Left ventricle myocardium inferior (tissue), 1 donor: ENCODE measurements at regions of chr7 and their contacts with region 1.

Region 1: GRCh38 chr7:54839538-54840213 is 80.7 kb upstream of the SEC61G start:
- DNase-seq: peak; percentile 82
- H3K4me3 ChIP-seq: no peak overlapping the region
- H3K27ac ChIP-seq: peak overlapping the region; percentile 36
- H3K4me1 ChIP-seq: peaks cover 33% of the 10 kb centered on the region
- H3K27me3 ChIP-seq: no peaks in the 10 kb centered on the region
- CTCF ChIP-seq: peak; percentile 80

Region 2: GRCh38 chr7:54360075-54360840 is 479.4 kb before region 1 on chr7:
- intact Hi-C with region 1: no loop called
- DNase-seq: no peak
- H3K4me3 ChIP-seq: no peak overlapping the region
- H3K27ac ChIP-seq: no peak overlapping the region
- H3K4me1 ChIP-seq: no peaks in the 10 kb centered on the region
- H3K27me3 ChIP-seq: no peaks in the 10 kb centered on the region
- CTCF ChIP-seq: no peak

Region 3: GRCh38 chr7:55018361-55019190 is 178.9 kb after region 1 on chr7 and contains the start of gene EGFR:
- intact Hi-C with region 1: loop called (anchors 10 kb)
- DNase-seq: peak; percentile 85
- H3K4me3 ChIP-seq: peak within 1 kb of the TSS; percentile 85
- H3K27ac ChIP-seq: peak within 1 kb of the TSS; percentile 96
- H3K4me1 ChIP-seq: peaks cover 28% of the 10 kb centered on the region
- H3K27me3 ChIP-seq: peaks cover 58% of the 10 kb centered on the region
- CTCF ChIP-seq: no peak
- total RNA-seq, gene EGFR: 6.1 TPM